ENCODE measurements at regions of chr17 and their contacts with region 1.

Region 1: DNA sequence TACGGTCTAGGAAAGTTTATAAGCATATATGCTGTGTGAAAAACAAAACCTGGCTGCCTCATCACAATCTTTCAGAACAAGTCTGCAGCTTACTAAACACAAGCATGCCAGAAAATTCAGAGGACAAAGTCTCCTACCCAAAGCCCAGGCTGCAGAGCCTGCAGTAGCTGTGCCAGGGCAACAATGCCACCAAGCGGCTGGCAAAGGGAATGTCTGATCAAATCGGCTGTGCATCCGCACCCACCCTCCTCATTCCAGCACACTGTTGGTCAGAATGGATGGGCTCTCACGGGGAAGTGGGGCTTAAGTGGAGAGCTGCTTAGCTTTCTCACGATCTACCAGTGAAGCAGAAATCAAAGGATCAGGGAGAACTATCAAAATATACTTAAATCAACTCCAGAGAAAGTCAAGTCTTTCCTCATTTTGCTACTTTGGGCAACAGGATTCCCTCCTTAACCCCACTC is 73.5 kb downstream of the CYTH1 start:
- DNase-seq: peak; percentile 35
- H3K4me3 Mint-ChIP-seq: peak overlapping the region; percentile 55
- H3K27ac Mint-ChIP-seq: peak overlapping the region; percentile 84
- H3K4me1 Mint-ChIP-seq: peaks cover 56% of the 10 kb centered on the region
- H3K27me3 Mint-ChIP-seq: no peaks in the 10 kb centered on the region

Region 2: DNA sequence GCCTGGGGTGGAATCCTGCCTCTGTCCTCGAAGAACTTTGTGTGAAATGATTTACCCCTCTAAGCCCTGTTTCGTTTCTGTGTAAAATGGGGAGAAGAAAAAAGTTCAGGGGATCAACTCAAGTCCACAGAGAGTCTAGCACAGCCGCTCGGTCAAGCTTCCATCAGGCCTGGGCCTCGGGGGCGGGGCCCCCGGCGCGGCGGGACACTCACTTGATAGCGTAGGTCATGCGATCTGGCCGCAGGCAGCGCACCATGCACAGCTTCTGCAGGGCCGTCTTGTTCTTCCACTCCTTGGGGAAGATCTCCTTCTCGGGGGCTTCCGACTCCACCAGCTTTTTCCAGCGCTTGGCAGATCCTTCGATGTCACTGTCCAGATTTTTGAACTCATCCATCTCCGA is 264.1 kb before region 1 on chr17:
- intact Hi-C with region 1: loop called (anchors 2 kb)
- DNase-seq: no peak
- H3K4me3 Mint-ChIP-seq: no peak overlapping the region
- H3K27ac Mint-ChIP-seq: no peak overlapping the region
- H3K4me1 Mint-ChIP-seq: no peaks in the 10 kb centered on the region
- H3K27me3 Mint-ChIP-seq: no peaks in the 10 kb centered on the region

Region 3: GRCh38 chr17:78497115-78497540 is 211.4 kb before region 1 on chr17:
- intact Hi-C with region 1: loop called (anchors 1 kb)
- DNase-seq: peak; percentile 30
- H3K4me3 Mint-ChIP-seq: no peak overlapping the region
- H3K27ac Mint-ChIP-seq: no peak overlapping the region
- H3K4me1 Mint-ChIP-seq: no peaks in the 10 kb centered on the region
- H3K27me3 Mint-ChIP-seq: peaks cover 2% of the 10 kb centered on the region

Region 4: DNA sequence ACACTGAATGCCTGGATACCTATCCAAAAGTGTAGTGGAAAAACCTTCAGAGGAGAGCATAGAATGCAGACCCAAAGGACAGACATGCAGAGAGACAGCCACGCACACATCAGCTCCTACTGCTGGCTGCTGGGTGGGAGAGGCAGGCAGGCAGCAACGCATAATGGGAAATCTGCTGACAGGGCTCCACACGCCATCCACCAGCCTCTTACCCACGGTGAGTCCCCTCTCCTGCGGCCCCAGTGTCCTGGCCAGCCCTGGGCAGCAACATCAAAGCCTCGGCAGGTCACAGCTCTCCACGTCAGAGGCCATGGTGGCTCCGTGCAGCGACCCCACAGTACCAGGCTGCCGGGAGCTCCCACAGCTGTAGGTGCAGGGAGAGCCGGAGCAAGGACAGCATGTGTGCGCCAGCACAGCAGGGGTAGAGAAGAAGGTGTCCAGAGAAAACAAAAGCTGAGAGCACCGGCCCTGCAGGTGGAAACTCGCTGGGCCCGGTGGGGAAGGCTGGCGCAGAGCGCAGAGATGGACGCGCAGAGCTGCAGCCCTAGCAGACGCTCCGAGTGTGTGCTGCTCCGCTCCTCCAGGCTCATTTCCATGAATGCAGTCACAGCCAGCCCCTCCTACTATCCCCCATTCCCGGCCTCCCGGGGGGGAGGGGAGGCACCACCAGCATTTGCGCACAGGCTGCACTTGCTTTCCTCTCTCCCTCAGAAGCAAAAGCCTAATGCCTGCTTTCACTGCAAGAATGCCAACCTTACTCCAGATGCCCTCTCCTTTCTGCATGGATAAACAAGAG is 14.7 kb after region 1 on chr17:
- intact Hi-C with region 1: loop called (anchors 1 kb)
- DNase-seq: no peak
- H3K4me3 Mint-ChIP-seq: no peak overlapping the region
- H3K27ac Mint-ChIP-seq: peak overlapping the region; percentile 45
- H3K4me1 Mint-ChIP-seq: peaks cover 75% of the 10 kb centered on the region
- H3K27me3 Mint-ChIP-seq: no peaks in the 10 kb centered on the region

Region 5: GRCh38 chr17:78781948-78782916 is 73.7 kb after region 1 on chr17 and contains the start of gene CYTH1:
- intact Hi-C with region 1: no loop called
- DNase-seq: peak; percentile 96
- H3K4me3 Mint-ChIP-seq: peak within 1 kb of the TSS; percentile 90
- H3K27ac Mint-ChIP-seq: peak within 1 kb of the TSS; percentile 91
- H3K4me1 Mint-ChIP-seq: peaks cover 51% of the 10 kb centered on the region
- H3K27me3 Mint-ChIP-seq: no peaks in the 10 kb centered on the region
- total RNA-seq, gene CYTH1: 147 TPM in 2 replicates

Region 6: GRCh38 chr17:78818932-78819331 is 110.4 kb after region 1 on chr17:
- intact Hi-C with region 1: loop called (anchors 2 kb)
- DNase-seq: peak; percentile 64
- H3K4me3 Mint-ChIP-seq: peak overlapping the region; percentile 74
- H3K27ac Mint-ChIP-seq: peak overlapping the region; percentile 91
- H3K4me1 Mint-ChIP-seq: peaks cover 53% of the 10 kb centered on the region
- H3K27me3 Mint-ChIP-seq: no peaks in the 10 kb centered on the region

Measured in activated T-helper 1 cell treated with anti-CD3 and anti-CD28 coated beads, Interleukin-12 subunit alpha, Interleukin-12 subunit beta, Interleukin-2, Interleukin-4 antibody, amounts not matched to agents 30 ng/mL and 10 ng/mL and 1 ng/mL, durations not matched to agents 14 hours and 24 hours and 36 hours (primary cell).